ENCODE measurements at regions of chr15 and their contacts with region 1.

Region 1: DNA sequence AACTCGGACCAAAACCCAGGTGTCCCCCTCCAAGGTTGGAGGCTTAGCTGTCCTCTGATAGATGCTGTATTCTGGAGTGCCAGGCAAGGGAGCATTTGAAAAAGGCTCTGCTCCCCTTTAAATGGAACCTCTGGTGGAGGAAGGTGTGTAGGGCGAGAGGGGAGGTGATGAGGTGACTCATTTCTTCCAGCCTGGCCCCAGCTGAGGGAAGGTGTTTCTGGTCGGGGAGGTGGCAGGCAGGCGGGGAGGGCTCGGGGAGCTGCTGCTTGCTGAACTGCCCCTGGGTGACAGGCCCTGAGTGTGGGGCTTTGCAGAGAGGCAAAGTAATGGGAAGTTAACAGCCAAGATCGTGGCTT is 18.8 kb downstream of the PSTPIP1 start:
- DNase-seq: peak in 5 of 9 donors; percentile 45 to 82 (median 49)
- ATAC-seq: peak; percentile 73
- H3K4me3 ChIP-seq: peak overlapping the region; percentile 43
- H3K4me3 Mint-ChIP-seq: peak overlapping the region; percentile 64 to 91 (median 77)
- H3K27ac ChIP-seq: peak overlapping the region; percentile 58
- H3K27ac Mint-ChIP-seq: peak overlapping the region; percentile 76 to 97 (median 95)
- H3K4me1 ChIP-seq: peaks cover 62 to 99% of the 10 kb centered on the region in 2 donors
- H3K4me1 Mint-ChIP-seq: peaks cover 58 to 93% (median 75%) of the 10 kb centered on the region in 7 donors
- H3K27me3 ChIP-seq: no peaks in the 10 kb centered on the region
- H3K27me3 Mint-ChIP-seq: no peaks in the 10 kb centered on the region

Region 2: GRCh38 chr15:76815401-76815800 is 198.4 kb before region 1 on chr15:
- CTCF ChIA-PET with region 1: no interaction called
- POLR2A ChIA-PET with region 1: no interaction called
- intact Hi-C with region 1: no loop called
- DNase-seq: no peak
- ATAC-seq: no peak
- H3K4me3 ChIP-seq: no peak overlapping the region
- H3K4me3 Mint-ChIP-seq: no peak overlapping the region
- H3K27ac ChIP-seq: no peak overlapping the region
- H3K27ac Mint-ChIP-seq: peak overlapping the region in 3 of 9 donors; percentile 14 to 66 (median 58)
- H3K4me1 ChIP-seq: peaks cover 0 to 6% of the 10 kb centered on the region in 2 donors
- H3K4me1 Mint-ChIP-seq: peaks cover 11 to 62% (median 38%) of the 10 kb centered on the region in 7 donors
- H3K27me3 ChIP-seq: no peaks in the 10 kb centered on the region
- H3K27me3 Mint-ChIP-seq: no peaks in the 10 kb centered on the region

Region 3: GRCh38 chr15:76994971-76995945 is 18.5 kb before region 1 on chr15 and contains the start of gene PSTPIP1:
- CTCF ChIA-PET with region 1: interaction called, 13 read pairs
- POLR2A ChIA-PET with region 1: interaction called, 45 read pairs
- intact Hi-C with region 1: loop called (anchors 1 kb)
- DNase-seq: peak; percentile 52 to 79 (median 74)
- ATAC-seq: peak; percentile 83
- H3K4me3 ChIP-seq: peak within 1 kb of the TSS; percentile 90
- H3K4me3 Mint-ChIP-seq: peak within 1 kb of the TSS; percentile 93 to 99 (median 96)
- H3K27ac ChIP-seq: peak within 1 kb of the TSS; percentile 80
- H3K27ac Mint-ChIP-seq: peak within 1 kb of the TSS; percentile 88 to 98 (median 96)
- H3K4me1 ChIP-seq: peaks cover 57 to 58% of the 10 kb centered on the region in 2 donors
- H3K4me1 Mint-ChIP-seq: peaks cover 61 to 76% (median 65%) of the 10 kb centered on the region in 7 donors
- H3K27me3 ChIP-seq: no peaks in the 10 kb centered on the region
- H3K27me3 Mint-ChIP-seq: no peaks in the 10 kb centered on the region
- total RNA-seq, gene PSTPIP1: 101 to 182 (median 146) TPM

Region 4: GRCh38 chr15:77002954-77003912 is 10.5 kb before region 1 on chr15:
- CTCF ChIA-PET with region 1: interaction called, 6 read pairs
- POLR2A ChIA-PET with region 1: interaction called, 45 read pairs
- intact Hi-C with region 1: loop called (anchors 1 kb)
- DNase-seq: peak in 8 of 9 donors; percentile 55 to 76 (median 66)
- ATAC-seq: peak; percentile 87
- H3K4me3 ChIP-seq: peak overlapping the region; percentile 28
- H3K4me3 Mint-ChIP-seq: peak overlapping the region; percentile 39 to 85 (median 76)
- H3K27ac ChIP-seq: peak overlapping the region; percentile 72
- H3K27ac Mint-ChIP-seq: peak overlapping the region; percentile 78 to 94 (median 87)
- H3K4me1 ChIP-seq: peaks cover 45 to 77% of the 10 kb centered on the region in 2 donors
- H3K4me1 Mint-ChIP-seq: peaks cover 65 to 89% (median 84%) of the 10 kb centered on the region in 7 donors
- H3K27me3 ChIP-seq: no peaks in the 10 kb centered on the region
- H3K27me3 Mint-ChIP-seq: no peaks in the 10 kb centered on the region